ENCODE measurements at regions of chr19 and their contacts with region 1.

Region 1: DNA sequence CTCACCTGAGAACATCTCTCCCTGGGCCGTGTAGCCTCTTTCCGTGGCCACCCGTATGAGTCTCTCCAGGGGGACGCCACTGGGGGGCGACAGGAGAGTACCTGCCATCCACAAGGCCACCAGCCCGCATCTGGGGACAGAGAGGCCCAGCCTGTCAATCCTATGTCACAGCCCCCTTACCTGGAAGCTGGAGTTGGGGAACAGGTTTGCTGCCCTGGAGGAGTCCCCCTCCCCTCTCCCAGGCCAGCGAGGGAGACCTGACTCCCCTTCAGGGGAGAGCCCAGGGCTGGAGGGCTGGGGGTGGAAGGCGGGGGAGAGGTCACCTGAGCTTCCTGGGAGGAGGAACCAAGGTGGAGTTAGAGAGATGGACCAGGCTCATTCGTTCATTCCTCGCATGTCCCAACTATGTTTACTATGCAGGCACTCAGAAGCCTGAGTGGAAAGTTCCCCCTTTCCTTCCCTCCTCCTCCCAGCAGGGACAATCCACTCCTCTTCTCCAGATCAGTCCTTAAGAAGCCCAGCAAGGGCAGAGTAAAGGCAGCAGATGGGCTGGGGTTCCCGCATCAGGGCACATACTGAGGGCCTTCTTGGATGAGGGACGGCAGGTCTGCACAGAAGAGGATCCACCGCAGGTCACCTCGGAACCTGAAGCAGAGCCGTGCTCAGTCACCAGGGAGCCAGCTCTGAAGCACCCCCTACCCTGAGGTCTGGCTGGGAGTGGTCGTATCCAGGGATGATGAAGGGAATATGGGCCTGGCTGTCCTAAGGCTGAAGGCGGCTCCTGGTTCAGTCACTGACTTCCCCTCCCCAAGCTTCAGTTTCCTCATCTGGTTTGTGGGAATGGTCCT is 5.5 kb downstream of the ACTMAP start:
- DNase-seq: no peak
- H3K4me3 ChIP-seq: no peak overlapping the region
- H3K27ac ChIP-seq: no peak overlapping the region
- H3K4me1 ChIP-seq: peaks cover 13% of the 10 kb centered on the region
- H3K27me3 ChIP-seq: no peaks in the 10 kb centered on the region
- CTCF ChIP-seq: peak in 1 of 2 donors; percentile 4

Region 2: DNA sequence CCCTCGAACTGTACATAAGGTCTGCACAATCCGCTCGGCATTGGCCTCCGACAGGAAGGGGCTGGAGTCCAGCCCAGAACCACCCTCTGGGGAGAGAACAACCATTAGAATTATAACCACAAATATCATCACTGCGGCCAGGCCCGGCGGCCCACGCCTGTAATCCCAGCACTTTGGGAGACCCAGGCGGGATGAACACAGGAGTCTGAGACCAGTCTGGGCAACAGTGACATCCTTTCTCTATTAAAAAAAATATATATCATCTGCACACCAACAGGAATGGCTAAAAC is 39.5 kb before region 1 on chr19:
- CTCF ChIA-PET with region 1: no interaction called
- dilution Hi-C with region 1: loop called (anchors 5 kb)
- in situ Hi-C with region 1: no loop called
- intact Hi-C with region 1: no loop called
- DNase-seq: no peak
- H3K4me3 ChIP-seq: no peak overlapping the region
- H3K27ac ChIP-seq: no peak overlapping the region
- H3K4me1 ChIP-seq: no peaks in the 10 kb centered on the region
- H3K27me3 ChIP-seq: no peaks in the 10 kb centered on the region
- CTCF ChIP-seq: no peak